PC-9 (cell line): ENCODE measurements at regions of chr3 and their contacts with region 1.

Region 1: DNA sequence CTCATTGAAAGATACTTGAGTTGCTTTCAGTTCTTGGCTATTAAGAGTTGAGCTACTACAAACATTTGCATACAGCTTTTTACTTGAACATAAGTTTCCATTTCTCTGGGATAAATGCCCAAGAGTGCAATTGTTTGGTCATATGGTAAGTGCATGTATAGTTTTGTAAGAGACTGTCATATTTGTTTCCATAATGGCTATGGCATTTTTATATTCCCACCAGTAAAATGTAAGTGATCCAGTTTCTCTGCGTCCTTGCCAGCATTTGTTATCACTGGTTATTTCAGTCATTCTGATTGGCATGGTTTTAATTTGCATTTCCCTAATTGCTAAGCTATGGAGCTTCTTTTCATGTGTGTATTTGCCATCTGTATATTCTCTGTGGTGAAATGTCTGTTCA is 22.5 kb downstream of the C3orf80 start:
- DNase-seq: no peak
- H3K4me3 ChIP-seq: no peak overlapping the region
- H3K27ac ChIP-seq: no peak overlapping the region
- H3K4me1 ChIP-seq: no peaks in the 10 kb centered on the region
- H3K27me3 ChIP-seq: no peaks in the 10 kb centered on the region
- CTCF ChIP-seq: no peak

Region 2: GRCh38 chr3:159978353-159978752 is 269.4 kb before region 1 on chr3:
- CTCF ChIA-PET with region 1: no interaction called
- POLR2A ChIA-PET with region 1: no interaction called
- intact Hi-C with region 1: no loop called
- DNase-seq: no peak
- H3K4me3 ChIP-seq: no peak overlapping the region
- H3K27ac ChIP-seq: no peak overlapping the region
- H3K4me1 ChIP-seq: no peaks in the 10 kb centered on the region
- H3K27me3 ChIP-seq: no peaks in the 10 kb centered on the region
- CTCF ChIP-seq: no peak

Region 3: GRCh38 chr3:160331127-160331937 is 83.6 kb after region 1 on chr3:
- CTCF ChIA-PET with region 1: interaction called, 12 read pairs
- POLR2A ChIA-PET with region 1: no interaction called
- intact Hi-C with region 1: no loop called
- DNase-seq: no peak
- H3K4me3 ChIP-seq: 0 out of 2 replicates have a peak overlapping the region, but pooled peaks have one; percentile 1
- H3K27ac ChIP-seq: peak overlapping the region; percentile 82
- H3K4me1 ChIP-seq: peaks cover 13% of the 10 kb centered on the region
- H3K27me3 ChIP-seq: no peaks in the 10 kb centered on the region
- CTCF ChIP-seq: no peak

Region 4: GRCh38 chr3:160869818-160870217 is 622.1 kb after region 1 on chr3:
- CTCF ChIA-PET with region 1: no interaction called
- POLR2A ChIA-PET with region 1: no interaction called
- intact Hi-C with region 1: no loop called
- DNase-seq: peak; percentile 73 to 85
- H3K4me3 ChIP-seq: peak overlapping the region; percentile 24; the same call in 1 of the 2 replicates
- H3K27ac ChIP-seq: no peak overlapping the region
- H3K4me1 ChIP-seq: peaks cover 12% of the 10 kb centered on the region
- H3K27me3 ChIP-seq: no peaks in the 10 kb centered on the region
- CTCF ChIP-seq: no peak